ENCODE measurements at regions of chr3 and their contacts with region 1.

Region 1: DNA sequence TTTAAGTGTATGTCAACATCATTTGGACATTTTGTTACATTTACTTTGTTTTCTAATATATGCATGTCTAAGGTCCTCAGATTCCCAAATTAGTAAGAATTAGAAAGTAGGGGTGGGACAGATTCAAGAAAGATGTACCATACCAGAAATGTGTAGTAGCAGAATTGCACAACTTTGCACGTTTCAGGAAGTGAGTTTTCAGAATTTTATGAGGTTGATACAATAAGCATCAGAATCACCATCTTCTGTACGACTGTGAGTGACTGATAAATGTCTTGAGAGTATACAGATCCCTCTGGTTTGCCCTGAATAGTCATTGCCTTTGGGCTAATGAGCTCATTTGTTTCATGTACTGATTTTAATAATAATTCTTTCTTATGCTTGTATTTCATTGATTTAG is 9.3 kb downstream of the ARIH2 start:
- DNase-seq: no peak
- H3K4me3 Mint-ChIP-seq: peak overlapping the region; percentile 51
- H3K27ac Mint-ChIP-seq: peak overlapping the region; percentile 86
- H3K4me1 Mint-ChIP-seq: peaks cover 64% of the 10 kb centered on the region
- H3K27me3 Mint-ChIP-seq: no peaks in the 10 kb centered on the region

Region 2: GRCh38 chr3:48945891-48946549 is 18.1 kb after region 1 on chr3:
- intact Hi-C with region 1: loop called (anchors 2 kb)
- DNase-seq: no peak
- H3K4me3 Mint-ChIP-seq: peak overlapping the region; percentile 6
- H3K27ac Mint-ChIP-seq: peak overlapping the region; percentile 83
- H3K4me1 Mint-ChIP-seq: peaks cover 29% of the 10 kb centered on the region
- H3K27me3 Mint-ChIP-seq: no peaks in the 10 kb centered on the region

Region 3: DNA sequence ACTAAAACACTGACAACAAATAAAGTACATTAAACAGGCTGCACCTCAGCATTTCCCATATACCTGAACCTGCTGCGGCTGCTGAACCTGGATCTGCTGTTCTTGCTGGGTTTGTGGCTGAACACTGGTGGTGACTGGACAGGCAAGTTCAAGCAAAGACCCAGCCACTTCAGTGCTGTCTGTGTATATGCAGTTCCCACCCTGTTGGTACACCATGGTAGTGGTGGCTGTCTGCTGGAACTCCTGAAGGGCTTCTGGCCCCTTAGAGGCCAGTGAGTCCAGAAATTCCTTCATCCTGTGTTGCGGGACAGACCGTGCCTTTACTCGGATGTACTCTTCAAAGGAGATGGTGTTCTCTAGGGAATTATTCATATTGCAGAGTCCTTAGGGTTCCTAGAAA is 148.7 kb after region 1 on chr3:
- intact Hi-C with region 1: no loop called
- DNase-seq: no peak
- H3K4me3 Mint-ChIP-seq: no peak overlapping the region
- H3K27ac Mint-ChIP-seq: no peak overlapping the region
- H3K4me1 Mint-ChIP-seq: peaks cover 4% of the 10 kb centered on the region
- H3K27me3 Mint-ChIP-seq: no peaks in the 10 kb centered on the region